GM12878 (cell line): ENCODE measurements at regions of chr15 and their contacts with region 1.

Region 1: GRCh38 chr15:81265944-81266775 is 57.8 kb downstream of the STARD5 start:
- DNase-seq: no peak
- ATAC-seq: peak; percentile 97
- H3K4me3 ChIP-seq: no peak overlapping the region
- H3K27ac ChIP-seq: no peak overlapping the region
- H3K4me1 ChIP-seq: peaks cover 22% of the 10 kb centered on the region
- H3K27me3 ChIP-seq: no peaks in the 10 kb centered on the region; a peak in 1 of 4 replicates
- CTCF ChIP-seq: peak; percentile 93 to 94 (median 94)
- EP300 ChIP-seq: no peak
- POLR2A ChIP-seq: no peak
- RAD21 ChIP-seq: peak; percentile 92

Region 2: DNA sequence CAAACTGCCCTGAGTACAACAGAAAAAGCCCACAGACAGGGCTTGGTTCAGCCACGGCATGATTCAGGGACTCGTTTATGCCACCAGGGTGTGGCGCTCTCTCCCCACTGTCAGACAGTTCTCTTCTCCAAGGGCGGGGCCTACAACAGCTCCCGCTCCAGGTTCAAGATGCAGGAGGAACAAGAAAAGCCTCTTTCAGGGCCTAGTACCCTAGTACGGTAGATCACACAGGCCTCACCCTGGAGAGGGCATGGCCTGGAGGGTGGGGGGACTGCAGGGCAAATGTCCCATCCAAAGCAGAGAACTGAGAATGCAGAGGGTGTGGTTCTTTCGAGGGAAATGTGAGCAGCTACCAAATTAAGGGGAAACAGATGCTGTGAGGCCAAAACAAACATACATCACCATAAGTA is 288.5 kb before region 1 on chr15:
- CTCF ChIA-PET with region 1: interaction called, 24 read pairs
- POLR2A ChIA-PET with region 1: interaction called, 3 read pairs
- RAD21 ChIA-PET with region 1: interaction called, 31 read pairs
- SMC1A ChIA-PET with region 1: interaction called, 14 read pairs
- in situ Hi-C with region 1: no loop called
- intact Hi-C with region 1: no loop called
- DNase-seq: no peak
- ATAC-seq: peak; percentile 72
- H3K4me3 ChIP-seq: no peak overlapping the region
- H3K27ac ChIP-seq: no peak overlapping the region
- H3K4me1 ChIP-seq: no peaks in the 10 kb centered on the region
- H3K27me3 ChIP-seq: no peaks in the 10 kb centered on the region
- CTCF ChIP-seq: peak; percentile 34 to 44 (median 43); a peak in 5 of 6 replicates
- EP300 ChIP-seq: no peak
- POLR2A ChIP-seq: no peak
- RAD21 ChIP-seq: peak; percentile 69

Region 3: GRCh38 chr15:81106560-81106959 is 159.6 kb before region 1 on chr15:
- CTCF ChIA-PET with region 1: interaction called, 438 read pairs
- POLR2A ChIA-PET with region 1: no interaction called
- RAD21 ChIA-PET with region 1: interaction called, 130 read pairs
- SMC1A ChIA-PET with region 1: interaction called, 89 read pairs
- in situ Hi-C with region 1: loop called (anchors 5 kb)
- intact Hi-C with region 1: loop called (anchors 1 kb)
- DNase-seq: peak; percentile 8
- ATAC-seq: peak; percentile 65
- H3K4me3 ChIP-seq: no peak overlapping the region
- H3K27ac ChIP-seq: no peak overlapping the region
- H3K4me1 ChIP-seq: peaks cover 7% of the 10 kb centered on the region
- H3K27me3 ChIP-seq: no peaks in the 10 kb centered on the region
- CTCF ChIP-seq: peak; percentile 75 to 83 (median 76)
- EP300 ChIP-seq: no peak
- POLR2A ChIP-seq: no peak
- RAD21 ChIP-seq: peak; percentile 89

Region 4: DNA sequence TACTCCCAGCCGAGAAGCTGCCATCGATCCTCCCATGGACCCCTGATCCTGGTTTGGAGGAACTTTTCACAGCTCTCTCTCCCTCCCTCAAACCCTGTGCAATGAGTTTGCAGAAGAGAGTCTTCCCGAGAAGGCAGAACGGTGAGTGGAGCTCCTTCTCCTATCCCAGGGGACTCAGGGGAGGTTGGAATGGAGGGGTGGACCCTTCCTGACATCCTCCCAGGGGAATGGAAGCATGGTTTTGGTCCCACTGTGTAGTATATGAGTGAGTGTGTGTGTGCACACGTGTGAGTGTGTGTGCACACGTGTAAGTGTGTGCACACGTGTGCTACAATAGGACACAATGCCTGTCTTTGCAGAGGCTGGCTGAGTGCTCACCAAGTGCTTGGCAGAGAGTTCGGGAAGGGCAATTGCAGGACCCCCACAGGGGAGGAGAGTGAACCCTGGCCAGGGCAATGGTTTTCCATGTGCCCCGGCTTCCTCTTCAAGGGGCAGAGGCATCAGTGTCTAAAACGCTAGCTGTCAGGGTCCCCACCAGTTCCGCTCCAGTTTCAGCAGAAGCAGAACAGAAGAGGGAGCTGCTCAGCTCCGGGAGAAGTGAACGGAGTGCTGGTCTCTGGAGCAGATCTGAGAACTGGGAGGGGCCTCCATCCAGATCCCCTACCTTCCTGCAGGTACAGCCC is 83.3 kb before region 1 on chr15:
- CTCF ChIA-PET with region 1: interaction called, 11 read pairs
- POLR2A ChIA-PET with region 1: no interaction called
- RAD21 ChIA-PET with region 1: no interaction called
- SMC1A ChIA-PET with region 1: no interaction called
- in situ Hi-C with region 1: no loop called
- intact Hi-C with region 1: no loop called
- DNase-seq: no peak
- ATAC-seq: no peak
- H3K4me3 ChIP-seq: no peak overlapping the region
- H3K27ac ChIP-seq: no peak overlapping the region
- H3K4me1 ChIP-seq: no peaks in the 10 kb centered on the region
- H3K27me3 ChIP-seq: peaks cover 2 to 3% of the 10 kb centered on the region in 2 experiments; a peak in 2 of 4 replicates
- CTCF ChIP-seq: no peak
- EP300 ChIP-seq: no peak
- POLR2A ChIP-seq: no peak
- RAD21 ChIP-seq: no peak

Region 5: GRCh38 chr15:81301815-81302399 is 35.7 kb after region 1 on chr15:
- CTCF ChIA-PET with region 1: interaction called, 24 read pairs
- POLR2A ChIA-PET with region 1: no interaction called
- RAD21 ChIA-PET with region 1: interaction called, 9 read pairs
- SMC1A ChIA-PET with region 1: interaction called, 4 read pairs
- in situ Hi-C with region 1: no loop called
- intact Hi-C with region 1: no loop called
- DNase-seq: peak; percentile 80
- ATAC-seq: peak; percentile 78
- H3K4me3 ChIP-seq: peak overlapping the region; percentile 62
- H3K27ac ChIP-seq: peak overlapping the region; percentile 99
- H3K4me1 ChIP-seq: peaks cover 55% of the 10 kb centered on the region
- H3K27me3 ChIP-seq: no peaks in the 10 kb centered on the region
- CTCF ChIP-seq: no peak
- EP300 ChIP-seq: peak; percentile 93 to 96
- POLR2A ChIP-seq: no peak
- RAD21 ChIP-seq: peak; percentile 28; the same call in 1 of the 2 replicates

Region 6: DNA sequence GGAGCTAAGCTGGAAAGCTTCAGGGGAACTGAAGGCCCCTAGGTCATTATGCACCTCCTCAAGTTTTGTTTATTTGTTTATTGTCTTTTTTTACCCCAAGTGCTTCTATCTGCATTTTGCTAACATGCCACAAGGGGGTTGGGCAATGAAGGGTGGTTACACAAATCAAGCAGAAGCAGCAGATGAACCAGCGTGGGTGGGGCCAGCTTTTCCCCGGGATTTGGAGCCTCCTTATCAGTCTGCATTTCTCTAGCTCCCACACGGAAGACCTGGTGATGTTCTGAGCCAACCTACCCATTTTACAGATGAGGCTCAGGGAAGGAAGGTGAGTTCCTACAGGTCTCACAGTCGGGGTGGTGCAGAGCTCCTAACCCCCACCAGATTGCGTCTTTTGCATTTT is 91.1 kb after region 1 on chr15:
- CTCF ChIA-PET with region 1: interaction called, 15 read pairs
- POLR2A ChIA-PET with region 1: no interaction called
- RAD21 ChIA-PET with region 1: no interaction called
- SMC1A ChIA-PET with region 1: no interaction called
- in situ Hi-C with region 1: no loop called
- intact Hi-C with region 1: no loop called
- DNase-seq: no peak
- ATAC-seq: peak; percentile 38; the same call in 1 of the 3 replicates
- H3K4me3 ChIP-seq: no peak overlapping the region
- H3K27ac ChIP-seq: no peak overlapping the region
- H3K4me1 ChIP-seq: no peaks in the 10 kb centered on the region
- H3K27me3 ChIP-seq: no peaks in the 10 kb centered on the region; a peak in 1 of 4 replicates
- CTCF ChIP-seq: peak in 2 of 3 experiments; percentile 13 to 17; a peak in 1 of 6 replicates
- EP300 ChIP-seq: no peak
- POLR2A ChIP-seq: no peak
- RAD21 ChIP-seq: no peak